Heart right ventricle (tissue), 16 donors: ENCODE measurements at regions of chr11 and their contacts with region 1.

Region 1: DNA sequence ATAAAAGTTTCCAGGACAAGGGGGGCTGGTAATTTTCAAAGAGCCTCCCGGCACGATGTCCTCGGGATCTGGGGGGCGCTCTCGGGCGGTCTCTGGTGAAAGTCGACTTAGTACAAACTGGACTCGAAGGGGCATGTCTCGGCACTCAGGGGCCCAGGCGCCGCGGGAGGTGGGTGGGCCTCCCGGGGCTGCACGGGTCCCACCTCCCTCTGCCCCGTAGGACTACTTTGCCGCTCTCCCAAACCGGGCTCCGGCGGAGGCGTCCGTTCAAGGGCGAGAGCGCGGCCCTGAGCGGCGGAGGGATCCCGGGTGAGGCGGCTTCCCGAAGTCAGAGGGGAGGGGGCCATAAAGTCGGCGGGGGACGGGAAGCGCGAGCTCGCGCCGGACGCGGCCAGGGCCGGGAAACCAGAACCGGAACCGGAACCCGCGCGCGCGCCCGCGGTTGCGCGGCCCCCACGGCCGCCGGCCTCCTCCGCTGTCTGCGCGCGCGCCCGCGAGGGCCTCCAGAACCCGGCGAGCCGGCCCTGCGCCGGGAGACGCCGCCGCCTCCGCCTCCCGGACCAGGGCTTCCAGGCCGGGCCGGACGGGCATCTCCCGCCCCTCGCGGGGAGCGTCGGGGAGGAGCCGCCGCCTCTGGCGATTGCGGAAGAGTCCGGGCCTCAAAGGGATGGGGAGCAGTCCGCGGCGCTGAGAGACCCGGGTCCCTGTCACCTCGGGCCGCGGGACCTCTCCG is at the start of gene ARHGEF12:
- DNase-seq: peak; percentile 97 to 98
- ATAC-seq: peak; percentile 74 to 89 (median 86)
- H3K4me3 ChIP-seq: peak within 1 kb of the TSS; percentile 82 to 99 (median 92)
- H3K27ac ChIP-seq: peak within 1 kb of the TSS; percentile 91 to 100 (median 99)
- H3K4me1 ChIP-seq: peaks cover 4 to 74% (median 56%) of the 10 kb centered on the region in 9 donors
- H3K27me3 ChIP-seq: peaks cover 0 to 94% (median 0%) of the 10 kb centered on the region in 7 donors
- CTCF ChIP-seq: peak in 7 of 9 donors; percentile 5 to 61 (median 29)
- total RNA-seq, gene ARHGEF12: 77.7 to 155 (median 115) TPM

Region 2: GRCh38 chr11:120303004-120303637 is 33.0 kb before region 1 on chr11:
- intact Hi-C with region 1: no loop called
- DNase-seq: peak; percentile 42 to 65
- ATAC-seq: peak in 7 of 8 donors; percentile 67 to 80 (median 77)
- H3K4me3 ChIP-seq: no peak overlapping the region
- H3K27ac ChIP-seq: no peak overlapping the region
- H3K4me1 ChIP-seq: peaks cover 0 to 12% (median 0%) of the 10 kb centered on the region in 9 donors
- H3K27me3 ChIP-seq: peaks cover 0 to 24% (median 13%) of the 10 kb centered on the region in 7 donors
- CTCF ChIP-seq: peak; percentile 69 to 94 (median 89)

Region 3: DNA sequence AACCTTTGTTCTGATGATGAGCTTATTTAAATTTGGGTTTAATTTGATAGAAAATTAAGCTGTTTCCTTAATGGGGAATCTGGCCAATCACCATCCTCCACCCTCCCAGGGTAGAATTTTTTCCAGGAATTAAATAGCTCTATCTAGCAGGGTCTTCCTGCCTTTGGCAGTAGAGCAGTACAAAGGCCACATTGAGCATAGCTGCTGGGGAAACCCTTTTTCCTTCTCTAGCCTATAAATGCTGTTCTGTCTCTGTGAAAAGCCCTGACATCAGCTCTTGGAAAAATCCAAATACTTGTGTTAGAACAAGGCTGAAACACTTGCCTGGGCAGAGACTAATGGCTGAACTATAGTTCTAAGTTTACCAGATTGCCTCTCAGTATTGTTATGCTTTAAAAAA is 55.2 kb after region 1 on chr11:
- intact Hi-C with region 1: loop called in 3 of 10 experiments (anchors 5 kb)
- DNase-seq: peak in 1 of 2 donors; percentile 16
- ATAC-seq: peak in 7 of 8 donors; percentile 37 to 83 (median 64)
- H3K4me3 ChIP-seq: no peak overlapping the region
- H3K27ac ChIP-seq: peak overlapping the region in 8 of 10 donors; percentile 2 to 69 (median 24)
- H3K4me1 ChIP-seq: peaks cover 4 to 64% (median 41%) of the 10 kb centered on the region in 9 donors
- H3K27me3 ChIP-seq: no peaks in the 10 kb centered on the region
- CTCF ChIP-seq: no peak

Region 4: DNA sequence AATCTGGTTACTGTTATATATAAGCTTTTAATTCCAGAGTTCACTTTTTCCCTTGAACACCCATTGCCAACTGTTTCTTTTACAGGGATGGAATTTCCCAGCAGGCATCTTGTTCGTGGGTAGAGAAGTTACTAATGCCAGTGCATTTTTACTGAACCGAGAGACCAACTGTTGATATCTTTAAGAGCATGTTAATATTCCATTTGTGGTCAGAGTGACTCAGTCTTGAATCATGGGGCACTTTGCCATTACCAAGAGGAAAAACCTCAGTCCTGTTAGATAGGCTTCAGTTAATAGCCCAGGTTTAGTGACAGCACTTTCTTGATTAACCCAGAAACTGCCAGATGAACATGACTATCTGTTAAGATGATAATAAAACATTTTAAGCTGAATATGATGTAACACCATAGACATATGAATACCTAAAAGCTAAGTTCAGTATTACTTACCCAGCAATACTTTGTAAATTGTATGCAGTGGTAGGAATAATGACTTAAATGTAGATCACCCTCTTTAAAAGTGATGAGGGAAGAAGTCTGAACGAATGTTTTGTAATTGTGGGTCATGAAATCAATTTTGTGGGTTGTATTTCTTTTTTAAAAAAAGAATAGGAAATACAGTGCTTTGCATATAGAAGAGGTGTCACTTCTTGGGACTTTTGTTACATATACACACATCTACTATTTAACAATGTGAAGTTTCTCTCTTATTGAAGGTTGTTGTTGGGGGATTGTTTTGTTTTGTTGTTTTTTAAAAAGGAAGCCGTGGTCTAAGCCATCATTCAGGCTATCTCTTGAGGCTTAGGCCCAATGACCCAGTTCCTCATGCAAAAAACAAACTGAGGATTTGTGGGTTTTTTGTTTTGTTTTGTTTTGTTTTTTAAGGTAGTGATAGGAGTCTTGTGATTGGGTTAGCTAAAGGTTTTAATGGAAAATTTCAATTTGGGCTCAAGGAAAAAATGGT is 96.3 kb after region 1 on chr11:
- intact Hi-C with region 1: loop called (anchors 1 to 10 kb)
- DNase-seq: peak in 1 of 2 donors; percentile 64
- ATAC-seq: peak; percentile 88 to 97 (median 94)
- H3K4me3 ChIP-seq: no peak overlapping the region
- H3K27ac ChIP-seq: peak overlapping the region in 8 of 10 donors; percentile 34 to 84 (median 74)
- H3K4me1 ChIP-seq: peaks cover 0 to 30% (median 22%) of the 10 kb centered on the region in 9 donors
- H3K27me3 ChIP-seq: no peaks in the 10 kb centered on the region
- CTCF ChIP-seq: no peak

Region 5: GRCh38 chr11:120494595-120494994 is 158.5 kb after region 1 on chr11:
- intact Hi-C with region 1: loop called in 2 of 10 experiments (anchors 5 to 10 kb)
- DNase-seq: no peak
- ATAC-seq: peak in 1 of 8 donors; percentile 14
- H3K4me3 ChIP-seq: no peak overlapping the region
- H3K27ac ChIP-seq: no peak overlapping the region
- H3K4me1 ChIP-seq: peaks cover 0 to 13% (median 0%) of the 10 kb centered on the region in 9 donors
- H3K27me3 ChIP-seq: no peaks in the 10 kb centered on the region
- CTCF ChIP-seq: no peak